K562 (cell line): ENCODE measurements at regions of chr6 and their contacts with region 1.

Region 1: GRCh38 chr6:132830334-132830751 is 16.0 kb downstream of the RPS12 start:
- DNase-seq: peak in 1 of 4 experiments; percentile 35
- ATAC-seq: peak; percentile 73
- H3K4me3 ChIP-seq: no peak overlapping the region
- H3K27ac ChIP-seq: no peak overlapping the region
- H3K4me1 ChIP-seq: no peaks in the 10 kb centered on the region; a peak in 1 of 5 replicates
- H3K27me3 ChIP-seq: no peaks in the 10 kb centered on the region
- CTCF ChIP-seq: peak; percentile 32 to 68 (median 41); a peak in 3 of 6 replicates
- EP300 ChIP-seq: no peak
- POLR2A ChIP-seq: no peak
- RAD21 ChIP-seq: peak; percentile 80 to 81

Region 2: DNA sequence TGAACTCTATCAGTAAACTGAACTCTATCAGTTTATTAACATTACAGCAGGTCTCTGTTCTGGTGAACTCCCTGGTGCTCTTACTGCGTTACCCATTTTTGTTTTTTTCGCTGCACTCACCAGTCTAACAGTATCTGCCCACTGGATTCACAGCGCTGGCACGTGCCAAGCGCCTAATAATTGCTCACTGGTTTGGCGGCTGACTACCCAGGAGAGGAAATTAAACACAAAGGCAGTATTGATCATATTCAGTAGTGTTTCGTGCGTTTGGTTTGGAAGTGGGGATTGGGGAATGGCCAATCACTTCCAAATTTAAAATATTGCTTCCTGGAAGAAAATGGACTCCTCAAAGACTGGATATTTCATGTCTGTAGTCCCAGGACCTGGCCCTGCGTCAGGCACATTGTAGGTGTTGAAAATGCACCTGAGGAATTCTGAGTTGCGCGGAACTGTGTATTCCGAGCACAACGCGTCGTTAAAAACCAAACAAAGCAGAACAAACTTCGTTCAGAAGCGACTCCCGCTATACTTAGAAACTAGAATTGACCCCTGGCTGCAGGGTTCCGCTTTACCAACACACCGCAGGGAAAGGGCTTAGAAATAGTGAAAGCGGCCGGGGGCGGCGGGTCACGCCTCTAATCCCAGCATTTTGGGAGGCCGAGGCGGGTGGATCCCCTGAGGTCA is 17.0 kb before region 1 on chr6:
- CTCF ChIA-PET with region 1: interaction called, 4 read pairs
- POLR2A ChIA-PET with region 1: interaction called, 43 read pairs
- in situ Hi-C with region 1: no loop called
- intact Hi-C with region 1: no loop called
- DNase-seq: peak; percentile 24 to 58 (median 37)
- ATAC-seq: peak; percentile 12
- H3K4me3 ChIP-seq: peak overlapping the region; percentile 76
- H3K27ac ChIP-seq: peak overlapping the region; percentile 99
- H3K4me1 ChIP-seq: peaks cover 4 to 22% of the 10 kb centered on the region in 2 experiments; a peak in 3 of 5 replicates
- H3K27me3 ChIP-seq: no peaks in the 10 kb centered on the region
- CTCF ChIP-seq: no peak
- EP300 ChIP-seq: no peak
- POLR2A ChIP-seq: no peak
- RAD21 ChIP-seq: no peak

Region 3: DNA sequence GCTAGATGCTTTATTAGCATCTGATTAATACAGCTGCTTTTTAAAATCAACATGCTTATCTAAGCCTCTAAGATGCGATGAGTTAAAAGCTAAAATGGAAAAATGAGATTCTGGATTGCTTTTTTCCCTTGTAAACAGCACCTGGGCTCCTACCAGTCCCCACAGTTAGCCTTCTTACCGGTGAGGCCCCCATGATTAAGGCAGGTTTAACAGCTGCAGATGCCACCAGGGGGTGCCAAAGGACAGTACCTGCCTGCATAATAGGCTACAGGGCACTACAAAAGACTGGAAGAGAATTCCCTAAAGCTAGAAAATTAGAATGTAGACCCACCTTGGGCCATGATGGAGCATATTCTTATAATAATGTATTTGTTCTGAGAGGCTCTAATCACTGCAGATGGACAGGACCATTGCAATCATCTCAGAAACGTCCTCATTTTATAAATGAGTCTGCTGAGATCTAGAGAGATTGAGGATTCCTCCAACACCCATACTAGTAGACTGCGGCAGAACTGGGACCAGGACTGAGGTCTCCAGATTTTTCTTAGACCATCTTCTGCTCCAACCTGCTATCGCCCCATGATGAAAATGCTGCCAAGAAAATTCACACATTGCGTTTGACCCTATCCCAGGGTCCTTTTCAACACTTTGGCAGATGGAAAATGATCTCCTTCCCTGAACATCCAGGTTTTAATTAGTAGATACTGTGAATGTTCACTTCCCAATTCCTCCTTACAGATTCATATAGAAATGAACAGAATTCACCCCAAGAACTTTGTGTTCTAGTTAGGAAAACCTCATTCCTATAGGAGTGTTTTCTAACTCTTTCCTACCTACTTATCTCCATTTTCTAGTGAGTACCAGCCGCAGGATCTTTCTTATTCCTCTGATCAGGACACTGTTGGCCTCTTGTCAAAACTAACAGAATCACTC is 132.9 kb after region 1 on chr6:
- CTCF ChIA-PET with region 1: interaction called, 3 read pairs
- POLR2A ChIA-PET with region 1: no interaction called
- in situ Hi-C with region 1: no loop called
- intact Hi-C with region 1: loop called (anchors 1 kb)
- DNase-seq: peak; percentile 58 to 77 (median 63)
- ATAC-seq: peak; percentile 95
- H3K4me3 ChIP-seq: no peak overlapping the region
- H3K27ac ChIP-seq: no peak overlapping the region
- H3K4me1 ChIP-seq: peaks cover 0 to 17% of the 10 kb centered on the region in 2 experiments; a peak in 3 of 5 replicates
- H3K27me3 ChIP-seq: no peaks in the 10 kb centered on the region
- CTCF ChIP-seq: peak; percentile 77 to 84 (median 80)
- EP300 ChIP-seq: no peak
- POLR2A ChIP-seq: no peak
- RAD21 ChIP-seq: peak; percentile 79 to 83

Region 4: GRCh38 chr6:133512410-133513016 is 682.2 kb after region 1 on chr6:
- CTCF ChIA-PET with region 1: no interaction called
- POLR2A ChIA-PET with region 1: no interaction called
- in situ Hi-C with region 1: no loop called
- intact Hi-C with region 1: loop called (anchors 1 kb)
- DNase-seq: peak; percentile 8 to 42 (median 14)
- ATAC-seq: peak; percentile 68; the same call in 2 of the 3 replicates
- H3K4me3 ChIP-seq: no peak overlapping the region
- H3K27ac ChIP-seq: no peak overlapping the region
- H3K4me1 ChIP-seq: no peaks in the 10 kb centered on the region
- H3K27me3 ChIP-seq: no peaks in the 10 kb centered on the region
- CTCF ChIP-seq: peak; percentile 50 to 64 (median 52)
- EP300 ChIP-seq: no peak
- POLR2A ChIP-seq: no peak
- RAD21 ChIP-seq: peak; percentile 66 to 73

Region 5: DNA sequence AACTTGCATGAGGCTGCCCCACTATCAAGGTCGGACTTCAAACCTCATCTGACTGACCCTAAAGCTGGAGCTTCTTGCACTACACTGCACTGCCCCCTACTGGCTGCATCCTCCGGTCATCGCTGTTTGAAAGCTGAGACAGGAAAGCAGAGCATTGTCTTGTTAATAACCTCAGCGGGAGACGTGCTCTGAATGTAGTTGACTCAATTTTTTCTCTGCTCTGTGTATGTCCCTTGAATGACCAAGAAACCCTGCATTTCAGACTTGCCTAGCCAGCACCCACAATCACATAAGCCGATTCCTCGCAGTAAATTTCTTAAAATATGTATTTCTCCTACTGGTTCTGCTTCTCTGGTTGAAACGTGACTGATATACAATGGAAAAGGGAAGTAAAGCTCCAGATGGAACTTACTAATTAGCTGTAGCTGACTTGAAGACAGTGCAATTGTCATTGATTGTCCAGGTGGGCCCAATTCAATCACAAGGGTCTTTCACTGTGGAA is 1086.4 kb after region 1 on chr6:
- CTCF ChIA-PET with region 1: no interaction called
- POLR2A ChIA-PET with region 1: no interaction called
- in situ Hi-C with region 1: loop called (anchors 25 kb)
- intact Hi-C with region 1: loop called (anchors 2 kb)
- DNase-seq: peak; percentile 68 to 89 (median 71)
- ATAC-seq: peak; percentile 94
- H3K4me3 ChIP-seq: no peak overlapping the region
- H3K27ac ChIP-seq: no peak overlapping the region
- H3K4me1 ChIP-seq: no peaks in the 10 kb centered on the region
- H3K27me3 ChIP-seq: no peaks in the 10 kb centered on the region; a peak in 1 of 5 replicates
- CTCF ChIP-seq: peak; percentile 88 to 92 (median 92)
- EP300 ChIP-seq: no peak
- POLR2A ChIP-seq: no peak
- RAD21 ChIP-seq: peak; percentile 90 to 92